ENCODE measurements at regions of chr20 and their contacts with region 1.

Region 1: GRCh38 chr20:50070991-50071888 is 41.7 kb downstream of the UBE2V1 start:
- DNase-seq: peak; percentile 94
- CTCF ChIP-seq: peak; percentile 100

Region 2: DNA sequence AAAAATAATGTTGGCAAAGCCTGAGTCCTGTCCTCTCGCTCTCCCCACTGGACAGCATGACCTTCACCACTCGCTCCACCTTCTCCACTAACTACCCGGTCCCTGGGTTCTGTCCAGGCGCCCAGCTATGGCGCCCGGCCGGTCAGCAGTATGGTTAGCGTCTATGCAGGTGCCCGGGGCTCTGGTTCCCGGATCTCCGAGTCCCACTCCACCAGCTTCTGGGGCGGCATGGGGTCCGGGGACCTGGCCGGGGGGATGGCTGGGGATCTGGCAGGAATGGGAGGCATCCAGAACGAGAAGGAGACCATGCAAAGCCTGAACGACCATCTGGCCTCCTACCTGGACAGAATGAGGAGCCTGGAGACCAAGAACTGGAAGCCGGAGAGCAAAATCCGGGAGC is 114.6 kb before region 1 on chr20:
- CTCF ChIA-PET with region 1: interaction called, 17 read pairs
- POLR2A ChIA-PET with region 1: no interaction called
- DNase-seq: no peak
- CTCF ChIP-seq: no peak

Region 3: DNA sequence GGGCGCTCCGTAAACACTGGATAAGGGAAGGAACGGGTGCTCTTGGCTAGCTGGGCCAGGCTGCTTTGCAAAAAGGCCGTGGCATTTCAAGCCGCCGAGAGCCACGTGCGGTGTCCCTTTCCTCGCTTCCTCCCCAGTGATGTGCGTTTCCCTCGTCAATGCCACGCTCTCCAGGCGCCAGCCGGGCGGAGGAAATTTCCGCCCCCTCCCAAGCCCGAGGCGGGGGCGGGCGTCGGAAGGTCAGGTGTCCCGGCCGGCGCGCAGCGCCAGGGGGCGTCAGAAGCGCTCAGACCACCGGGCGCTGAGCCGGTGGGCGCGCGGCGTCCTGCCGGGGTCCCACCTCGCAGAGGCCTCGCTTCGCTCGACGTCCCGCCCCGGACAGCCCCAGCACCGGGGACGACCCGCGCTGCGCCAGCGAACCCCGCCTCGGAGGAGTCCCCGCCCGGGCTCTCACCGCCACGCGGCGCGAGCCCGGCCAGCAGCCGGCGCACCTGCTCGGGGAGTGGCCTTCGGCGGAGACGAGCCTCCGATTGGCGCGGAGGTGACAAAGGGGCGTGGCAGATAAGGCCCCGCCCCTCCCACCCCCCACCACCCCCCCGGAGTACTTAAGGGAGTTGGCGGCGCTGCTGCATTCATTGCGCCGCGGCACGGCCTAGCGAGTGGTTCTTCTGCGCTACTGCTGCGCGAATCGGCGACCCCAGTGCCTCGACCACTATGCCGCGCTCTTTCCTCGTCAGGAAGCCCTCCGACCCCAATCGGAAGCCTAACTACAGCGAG is 88.7 kb before region 1 on chr20 and contains the start of gene SNAI1:
- CTCF ChIA-PET with region 1: interaction called, 331 read pairs
- POLR2A ChIA-PET with region 1: no interaction called
- DNase-seq: peak; percentile 99
- CTCF ChIP-seq: peak; percentile 54

Region 4: DNA sequence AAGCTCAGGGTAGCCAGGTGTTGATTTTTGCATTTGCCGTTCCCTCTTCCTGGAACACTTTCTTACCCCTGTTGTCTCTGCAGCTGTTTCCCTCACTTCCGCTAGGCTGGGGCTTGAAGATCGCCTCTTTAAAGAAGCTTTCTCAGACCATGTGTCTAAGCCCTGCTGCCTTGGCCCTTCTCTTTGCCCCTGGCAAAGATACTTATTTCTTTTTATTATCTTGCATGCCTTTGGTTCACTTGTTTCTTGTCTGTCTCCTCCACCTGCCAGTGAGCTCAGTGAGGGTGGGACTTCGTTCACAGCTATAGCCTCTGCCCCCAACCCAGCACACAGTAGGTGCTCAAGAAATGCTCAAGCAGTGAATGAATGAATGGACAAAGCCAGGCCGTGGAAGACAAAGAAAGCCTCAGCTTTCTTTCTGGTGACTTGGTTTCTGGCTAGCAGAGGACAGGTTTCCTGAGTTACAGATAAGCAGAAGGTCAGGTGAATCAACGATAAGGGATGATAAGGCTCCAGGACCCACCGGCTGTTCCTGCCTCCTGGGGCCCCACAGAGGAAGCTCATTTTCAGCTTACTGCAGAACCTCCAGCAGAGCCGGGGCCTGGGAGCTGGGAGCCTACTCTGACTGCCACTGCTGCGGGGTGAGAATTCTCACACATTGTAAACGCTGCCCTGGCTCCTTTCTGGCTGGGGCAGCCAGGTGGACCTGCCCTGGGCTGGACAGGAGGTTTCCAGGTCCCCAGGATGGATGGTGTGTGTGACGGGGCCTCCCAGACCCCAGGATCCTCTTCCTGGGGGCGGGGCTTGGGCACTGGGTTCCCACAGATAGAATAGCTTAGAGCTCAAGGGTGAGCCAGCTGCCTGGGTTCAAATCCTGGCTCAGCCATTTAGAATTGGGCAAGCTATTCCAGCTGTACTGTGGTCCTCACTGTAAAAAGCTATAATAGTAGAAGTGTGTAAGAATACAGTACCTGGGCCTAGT is 58.7 kb before region 1 on chr20:
- CTCF ChIA-PET with region 1: interaction called, 25 read pairs
- POLR2A ChIA-PET with region 1: no interaction called
- DNase-seq: peak; percentile 54
- CTCF ChIP-seq: no peak

Region 5: GRCh38 chr20:50058747-50059404 is 12.4 kb before region 1 on chr20:
- CTCF ChIA-PET with region 1: interaction called, 56 read pairs
- POLR2A ChIA-PET with region 1: no interaction called
- DNase-seq: no peak
- CTCF ChIP-seq: no peak

Region 6: GRCh38 chr20:50110141-50110925 is 39.1 kb after region 1 on chr20:
- CTCF ChIA-PET with region 1: interaction called, 12 read pairs
- POLR2A ChIA-PET with region 1: interaction called, 4 read pairs
- DNase-seq: peak; percentile 51
- CTCF ChIP-seq: no peak